ENCODE measurements at regions of chr3 and their contacts with region 1.

Region 1: DNA sequence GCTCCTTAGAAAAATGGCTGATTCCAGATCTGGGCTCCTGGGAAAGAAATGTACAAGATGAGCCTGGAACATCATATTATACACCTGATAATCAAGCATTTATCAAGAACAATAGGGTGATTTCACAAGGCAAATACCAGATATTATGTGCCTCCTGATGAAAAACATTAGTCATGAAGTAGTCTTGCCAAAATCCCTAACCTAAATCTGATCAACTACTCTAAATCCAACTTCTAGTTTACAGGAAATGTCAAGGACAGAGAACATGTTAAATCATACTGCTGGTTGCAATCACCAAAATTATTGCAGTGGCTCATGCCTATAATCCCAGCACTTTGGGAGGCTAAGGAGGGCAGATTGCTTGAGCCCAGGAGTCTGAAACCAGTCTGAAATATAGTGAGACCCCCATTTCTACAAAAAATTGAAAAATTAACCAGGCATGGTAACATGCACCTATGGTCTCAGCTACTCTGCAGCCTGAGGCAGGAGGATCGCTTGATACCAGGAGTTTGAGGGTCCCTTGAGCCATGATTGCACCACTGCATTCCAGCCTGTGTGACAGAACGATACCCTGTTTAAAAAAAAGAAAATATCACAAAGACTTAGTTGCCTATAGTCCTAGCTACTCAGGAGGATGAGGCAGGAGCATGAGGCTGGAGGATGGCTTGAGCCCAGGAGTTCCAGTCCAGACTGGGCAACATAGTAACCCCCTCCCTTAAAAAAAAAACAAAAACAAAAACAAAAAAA is 34.9 kb upstream of the ATP13A3 start:
- DNase-seq: no peak
- H3K4me3 Mint-ChIP-seq: no peak overlapping the region
- H3K27ac Mint-ChIP-seq: no peak overlapping the region
- H3K4me1 Mint-ChIP-seq: peaks cover 41% of the 10 kb centered on the region
- H3K27me3 Mint-ChIP-seq: peaks cover 35% of the 10 kb centered on the region

Region 2: DNA sequence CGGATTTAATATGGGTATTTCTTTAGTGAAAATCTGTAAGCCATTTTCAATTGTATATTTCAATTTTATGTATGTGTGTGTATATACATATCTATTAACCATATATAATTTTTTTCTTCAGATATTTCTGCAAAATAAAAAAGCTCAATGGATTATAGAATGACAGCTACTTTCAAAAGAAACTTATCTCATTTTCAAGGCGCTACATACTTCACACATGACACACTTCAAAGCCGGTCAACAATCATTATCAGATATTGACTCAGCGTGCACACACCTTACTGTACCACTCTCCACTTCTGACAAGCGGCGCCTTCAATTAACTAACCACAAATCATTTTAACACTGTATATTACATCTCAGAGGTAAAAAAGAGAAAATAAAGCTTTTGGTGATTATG is 74.5 kb before region 1 on chr3:
- CTCF ChIA-PET with region 1: no interaction called
- POLR2A ChIA-PET with region 1: no interaction called
- intact Hi-C with region 1: no loop called
- DNase-seq: peak; percentile 19
- H3K4me3 Mint-ChIP-seq: no peak overlapping the region
- H3K27ac Mint-ChIP-seq: no peak overlapping the region
- H3K4me1 Mint-ChIP-seq: peaks cover 4% of the 10 kb centered on the region
- H3K27me3 Mint-ChIP-seq: no peaks in the 10 kb centered on the region

Region 3: DNA sequence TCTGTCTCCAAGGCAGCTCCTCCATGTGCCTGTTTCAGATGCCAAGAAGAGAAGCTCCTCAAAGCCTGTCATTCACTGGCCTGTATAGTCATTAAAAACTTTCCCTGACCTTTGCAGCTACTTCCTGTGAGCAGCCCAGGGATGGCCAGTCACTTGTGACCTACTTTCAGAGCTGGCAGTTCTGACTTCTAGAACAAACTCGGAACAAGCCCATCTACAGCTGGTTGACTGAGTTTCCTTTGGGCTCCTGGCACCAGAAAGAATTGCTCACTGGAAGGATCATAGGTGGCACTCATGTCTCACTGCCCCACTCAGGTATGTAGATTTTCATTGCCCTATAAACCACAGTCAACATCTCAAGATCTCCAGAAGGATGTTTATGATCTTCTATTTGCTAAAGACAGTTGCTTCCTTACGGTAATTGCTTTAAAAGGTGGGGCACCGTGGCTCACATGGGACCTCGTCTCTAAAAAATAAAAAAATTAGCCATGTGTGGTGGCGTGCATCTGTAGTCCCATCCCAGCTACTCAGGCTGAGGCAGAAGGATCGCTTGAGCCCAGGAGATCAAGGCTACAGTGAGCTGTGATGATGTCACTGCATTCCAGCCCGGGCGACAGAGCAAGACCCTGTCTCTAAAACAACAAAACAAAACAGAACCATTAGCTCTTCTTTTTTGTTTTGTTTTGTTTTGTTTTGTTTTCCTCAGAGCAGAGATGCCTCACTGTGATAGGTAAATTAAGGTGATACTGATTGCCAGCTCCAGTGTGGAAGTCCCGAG is 23.7 kb before region 1 on chr3:
- CTCF ChIA-PET with region 1: interaction called, 3 read pairs
- POLR2A ChIA-PET with region 1: no interaction called
- intact Hi-C with region 1: loop called (anchors 2 kb)
- DNase-seq: peak; percentile 34
- H3K4me3 Mint-ChIP-seq: no peak overlapping the region
- H3K27ac Mint-ChIP-seq: no peak overlapping the region
- H3K4me1 Mint-ChIP-seq: peaks cover 19% of the 10 kb centered on the region
- H3K27me3 Mint-ChIP-seq: no peaks in the 10 kb centered on the region

Region 4: GRCh38 chr3:194561306-194561974 is 39.8 kb after region 1 on chr3:
- CTCF ChIA-PET with region 1: no interaction called
- POLR2A ChIA-PET with region 1: no interaction called
- intact Hi-C with region 1: loop called (anchors 1 kb)
- DNase-seq: no peak
- H3K4me3 Mint-ChIP-seq: no peak overlapping the region
- H3K27ac Mint-ChIP-seq: peak overlapping the region; percentile 2
- H3K4me1 Mint-ChIP-seq: peaks cover 18% of the 10 kb centered on the region
- H3K27me3 Mint-ChIP-seq: peaks cover 12% of the 10 kb centered on the region

Region 5: DNA sequence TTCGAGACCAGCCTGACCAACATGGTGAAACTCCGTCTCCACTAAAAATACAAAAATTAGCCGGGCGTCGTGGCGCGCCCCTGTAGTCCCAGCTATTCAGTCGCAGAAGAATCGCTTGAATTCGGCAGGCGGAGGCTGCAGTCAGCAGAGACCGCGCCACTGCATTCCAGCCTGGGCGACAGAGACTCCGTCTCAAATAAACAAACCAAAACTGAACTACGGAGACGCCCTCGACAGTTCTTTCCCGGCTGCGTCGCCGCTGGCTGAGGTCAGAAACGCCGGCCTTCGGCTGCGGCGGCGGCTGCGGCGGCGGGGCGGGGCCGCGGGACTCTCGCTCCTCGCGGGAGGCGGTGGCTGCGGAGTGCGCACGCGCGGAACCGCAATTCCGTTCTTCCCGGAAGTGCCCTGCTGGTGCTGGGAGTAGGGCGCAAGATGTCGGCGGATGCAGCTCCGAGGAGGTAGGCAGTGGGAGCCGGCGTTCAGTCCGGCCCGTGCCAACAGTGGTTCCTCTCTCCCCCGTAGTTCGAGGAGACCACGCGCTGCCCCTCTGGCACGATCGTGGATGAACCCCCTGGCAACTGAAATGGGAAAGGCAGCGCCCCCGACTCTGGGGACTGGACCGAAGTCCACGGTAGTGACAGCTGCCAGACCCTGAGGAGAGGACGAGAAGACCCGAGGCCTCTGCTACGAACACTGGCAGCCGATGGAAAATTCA is 62.1 kb after region 1 on chr3:
- CTCF ChIA-PET with region 1: interaction called, 4 read pairs
- POLR2A ChIA-PET with region 1: interaction called, 3 read pairs
- intact Hi-C with region 1: loop called (anchors 1 kb)
- DNase-seq: peak; percentile 96
- H3K4me3 Mint-ChIP-seq: peak overlapping the region; percentile 96
- H3K27ac Mint-ChIP-seq: peak overlapping the region; percentile 97
- H3K4me1 Mint-ChIP-seq: peaks cover 27% of the 10 kb centered on the region
- H3K27me3 Mint-ChIP-seq: no peaks in the 10 kb centered on the region